CD4-positive, alpha-beta memory T cell (primary cell): ENCODE measurements at regions of chr1 and their contacts with region 1.

Region 1: GRCh38 chr1:89615676-89616598 is 17.0 kb upstream of the LRRC8C start:
- DNase-seq: no peak
- H3K4me3 ChIP-seq: no peak overlapping the region
- H3K4me3 Mint-ChIP-seq: no peak overlapping the region
- H3K27ac ChIP-seq: no peak overlapping the region
- H3K27ac Mint-ChIP-seq: peak overlapping the region in 6 of 7 donors; percentile 5 to 71 (median 44)
- H3K4me1 ChIP-seq: peaks cover 69% of the 10 kb centered on the region
- H3K4me1 Mint-ChIP-seq: peaks cover 51 to 92% (median 71%) of the 10 kb centered on the region in 4 donors
- H3K27me3 ChIP-seq: no peaks in the 10 kb centered on the region
- H3K27me3 Mint-ChIP-seq: no peaks in the 10 kb centered on the region

Region 2: GRCh38 chr1:89483010-89483756 is 132.8 kb before region 1 on chr1:
- CTCF ChIA-PET with region 1: interaction called, 23 read pairs
- POLR2A ChIA-PET with region 1: interaction called, 6 read pairs
- intact Hi-C with region 1: no loop called
- DNase-seq: peak; percentile 63 to 79 (median 68)
- H3K4me3 ChIP-seq: no peak overlapping the region
- H3K4me3 Mint-ChIP-seq: no peak overlapping the region
- H3K27ac ChIP-seq: no peak overlapping the region
- H3K27ac Mint-ChIP-seq: no peak overlapping the region
- H3K4me1 ChIP-seq: no peaks in the 10 kb centered on the region
- H3K4me1 Mint-ChIP-seq: peaks cover 0 to 10% (median 10%) of the 10 kb centered on the region in 4 donors
- H3K27me3 ChIP-seq: no peaks in the 10 kb centered on the region
- H3K27me3 Mint-ChIP-seq: no peaks in the 10 kb centered on the region

Region 3: GRCh38 chr1:89555550-89555949 is 60.4 kb before region 1 on chr1:
- CTCF ChIA-PET with region 1: no interaction called
- POLR2A ChIA-PET with region 1: no interaction called
- intact Hi-C with region 1: no loop called
- DNase-seq: no peak
- H3K4me3 ChIP-seq: no peak overlapping the region
- H3K4me3 Mint-ChIP-seq: peak overlapping the region in 1 of 8 donors; percentile 34
- H3K27ac ChIP-seq: no peak overlapping the region
- H3K27ac Mint-ChIP-seq: no peak overlapping the region
- H3K4me1 ChIP-seq: peaks cover 23% of the 10 kb centered on the region
- H3K4me1 Mint-ChIP-seq: peaks cover 28 to 42% (median 35%) of the 10 kb centered on the region in 4 donors
- H3K27me3 ChIP-seq: no peaks in the 10 kb centered on the region
- H3K27me3 Mint-ChIP-seq: no peaks in the 10 kb centered on the region

Region 4: DNA sequence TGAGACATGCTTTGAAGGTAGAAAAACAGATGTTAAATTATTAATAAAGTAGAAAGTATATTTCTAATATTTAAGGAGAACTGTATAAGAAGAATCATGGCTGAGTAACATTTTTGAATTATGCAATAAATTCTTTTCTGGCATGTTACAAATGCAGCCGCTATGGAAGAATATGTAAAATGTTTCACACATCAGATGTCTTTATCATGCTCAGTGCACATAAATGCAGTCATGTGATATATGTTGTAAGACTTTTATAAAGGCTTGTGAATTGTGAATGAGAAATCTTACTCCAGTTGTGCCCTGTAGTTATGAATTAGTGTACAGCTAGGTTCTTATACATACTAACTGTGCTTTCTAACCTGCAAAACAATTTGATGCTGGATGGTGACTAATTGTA is 37.8 kb before region 1 on chr1:
- CTCF ChIA-PET with region 1: interaction called, 23 read pairs
- POLR2A ChIA-PET with region 1: interaction called, 3 read pairs
- intact Hi-C with region 1: no loop called
- DNase-seq: no peak
- H3K4me3 ChIP-seq: no peak overlapping the region
- H3K4me3 Mint-ChIP-seq: no peak overlapping the region
- H3K27ac ChIP-seq: no peak overlapping the region
- H3K27ac Mint-ChIP-seq: no peak overlapping the region
- H3K4me1 ChIP-seq: no peaks in the 10 kb centered on the region
- H3K4me1 Mint-ChIP-seq: peaks cover 0 to 7% (median 4%) of the 10 kb centered on the region in 4 donors
- H3K27me3 ChIP-seq: no peaks in the 10 kb centered on the region
- H3K27me3 Mint-ChIP-seq: no peaks in the 10 kb centered on the region

Region 5: GRCh38 chr1:89605692-89606091 is 10.2 kb before region 1 on chr1:
- CTCF ChIA-PET with region 1: interaction called, 688 read pairs
- POLR2A ChIA-PET with region 1: interaction called, 813 read pairs
- intact Hi-C with region 1: no loop called
- DNase-seq: no peak
- H3K4me3 ChIP-seq: peak overlapping the region in 1 of 2 donors; percentile 0
- H3K4me3 Mint-ChIP-seq: peak overlapping the region in 6 of 8 donors; percentile 29 to 97 (median 64)
- H3K27ac ChIP-seq: peak overlapping the region; percentile 84
- H3K27ac Mint-ChIP-seq: peak overlapping the region; percentile 98 to 100 (median 99)
- H3K4me1 ChIP-seq: peaks cover 95% of the 10 kb centered on the region
- H3K4me1 Mint-ChIP-seq: peaks cover 73 to 98% (median 87%) of the 10 kb centered on the region in 4 donors
- H3K27me3 ChIP-seq: no peaks in the 10 kb centered on the region
- H3K27me3 Mint-ChIP-seq: no peaks in the 10 kb centered on the region

Region 6: GRCh38 chr1:89719502-89720306 is 103.8 kb after region 1 on chr1:
- CTCF ChIA-PET with region 1: interaction called, 6 read pairs
- POLR2A ChIA-PET with region 1: interaction called, 22 read pairs
- intact Hi-C with region 1: no loop called
- DNase-seq: peak in 4 of 5 donors; percentile 30 to 45 (median 37)
- H3K4me3 ChIP-seq: no peak overlapping the region
- H3K4me3 Mint-ChIP-seq: peak overlapping the region in 7 of 8 donors; percentile 25 to 83 (median 70)
- H3K27ac ChIP-seq: peak overlapping the region; percentile 50
- H3K27ac Mint-ChIP-seq: peak overlapping the region; percentile 84 to 96 (median 91)
- H3K4me1 ChIP-seq: peaks cover 83% of the 10 kb centered on the region
- H3K4me1 Mint-ChIP-seq: peaks cover 52 to 81% (median 72%) of the 10 kb centered on the region in 4 donors
- H3K27me3 ChIP-seq: no peaks in the 10 kb centered on the region
- H3K27me3 Mint-ChIP-seq: no peaks in the 10 kb centered on the region